ENCODE measurements at regions of chr6 and their contacts with region 1.

Region 1: GRCh38 chr6:30259140-30260035 is 46.2 kb upstream of the TRIM26 start:
- DNase-seq: peak; percentile 68
- H3K4me3 ChIP-seq: peak overlapping the region; percentile 65 to 80
- H3K27ac ChIP-seq: peak overlapping the region; percentile 63 to 84
- H3K4me1 ChIP-seq: no peaks in the 10 kb centered on the region
- H3K27me3 ChIP-seq: no peaks in the 10 kb centered on the region
- CTCF ChIP-seq: peak in 2 of 4 experiments; percentile 19 to 28
- POLR2A ChIP-seq: no peak

Region 2: GRCh38 chr6:30219244-30219643 is 40.1 kb before region 1 on chr6:
- intact Hi-C with region 1: loop called (anchors 5 kb)
- DNase-seq: peak; percentile 43
- H3K4me3 ChIP-seq: no peak overlapping the region
- H3K27ac ChIP-seq: no peak overlapping the region
- H3K4me1 ChIP-seq: no peaks in the 10 kb centered on the region
- H3K27me3 ChIP-seq: no peaks in the 10 kb centered on the region
- CTCF ChIP-seq: peak; percentile 29 to 74 (median 62)
- POLR2A ChIP-seq: no peak